Naive thymus-derived CD4-positive, alpha-beta T cell (primary cell): ENCODE measurements at regions of chr17 and their contacts with region 1.

Region 1: DNA sequence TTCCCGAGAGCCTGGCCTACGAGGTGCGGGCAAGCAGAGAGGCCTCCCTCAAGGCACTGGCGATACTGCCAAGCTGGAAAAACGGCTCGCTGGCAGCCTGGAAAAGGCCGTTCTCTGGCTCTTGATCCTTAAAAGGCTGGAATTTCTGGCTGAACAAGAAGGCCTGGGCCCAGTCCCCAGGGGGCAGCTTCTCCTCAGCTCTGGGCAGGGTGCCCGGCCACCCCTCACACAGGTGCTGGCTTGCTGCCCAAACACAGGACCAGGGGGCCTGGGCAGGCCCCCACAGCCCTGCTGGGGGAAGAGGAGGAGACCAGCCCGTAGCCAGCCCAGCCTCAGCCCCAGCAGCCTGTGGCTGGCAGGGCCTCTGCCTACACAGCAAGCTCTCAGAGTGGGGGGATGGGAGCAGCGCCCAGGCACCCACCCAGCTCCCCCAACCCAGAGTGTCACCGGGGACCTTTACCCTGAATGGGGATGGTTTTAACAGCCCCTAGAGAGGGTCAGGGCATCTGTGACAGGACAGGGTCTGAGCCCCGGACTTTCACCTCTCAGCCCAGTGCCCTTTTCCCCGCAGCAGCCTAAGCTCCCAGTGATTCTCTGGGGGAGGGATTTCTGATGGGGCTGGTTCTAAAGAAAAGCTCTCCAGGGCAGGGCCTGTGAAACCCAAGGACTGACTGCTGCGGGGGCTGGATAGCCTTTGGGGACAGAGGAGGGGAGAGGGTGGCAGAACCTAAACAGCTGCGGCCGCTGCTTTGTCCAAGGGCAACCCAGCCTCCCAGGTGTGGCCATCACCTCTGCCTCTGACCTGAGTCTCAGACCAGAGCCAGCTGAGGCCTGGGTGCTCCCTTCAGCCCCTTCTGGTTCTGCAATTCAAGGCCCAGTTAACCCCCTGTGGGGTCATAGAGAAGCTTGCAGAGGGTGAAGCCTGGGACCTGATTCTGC is 38.6 kb upstream of the TOB1 start:
- DNase-seq: no peak
- ATAC-seq: no peak
- H3K4me3 ChIP-seq: no peak overlapping the region
- H3K4me3 Mint-ChIP-seq: no peak overlapping the region
- H3K27ac ChIP-seq: no peak overlapping the region
- H3K27ac Mint-ChIP-seq: no peak overlapping the region
- H3K4me1 ChIP-seq: peaks cover 31 to 47% of the 10 kb centered on the region in 2 donors
- H3K4me1 Mint-ChIP-seq: peaks cover 40 to 68% (median 64%) of the 10 kb centered on the region in 7 donors
- H3K27me3 ChIP-seq: no peaks in the 10 kb centered on the region
- H3K27me3 Mint-ChIP-seq: peaks cover 0 to 2% (median 0%) of the 10 kb centered on the region in 5 donors

Region 2: GRCh38 chr17:50893183-50893993 is 11.4 kb before region 1 on chr17:
- CTCF ChIA-PET with region 1: interaction called, 5 read pairs
- POLR2A ChIA-PET with region 1: interaction called, 19 read pairs
- intact Hi-C with region 1: no loop called
- DNase-seq: no peak
- ATAC-seq: no peak
- H3K4me3 ChIP-seq: no peak overlapping the region
- H3K4me3 Mint-ChIP-seq: no peak overlapping the region
- H3K27ac ChIP-seq: no peak overlapping the region
- H3K27ac Mint-ChIP-seq: no peak overlapping the region
- H3K4me1 ChIP-seq: no peaks in the 10 kb centered on the region
- H3K4me1 Mint-ChIP-seq: peaks cover 4 to 17% (median 6%) of the 10 kb centered on the region in 7 donors
- H3K27me3 ChIP-seq: no peaks in the 10 kb centered on the region
- H3K27me3 Mint-ChIP-seq: peaks cover 0 to 30% (median 0%) of the 10 kb centered on the region in 5 donors

Region 3: GRCh38 chr17:50919321-50920085 is 14.7 kb after region 1 on chr17:
- CTCF ChIA-PET with region 1: interaction called, 4 read pairs
- POLR2A ChIA-PET with region 1: interaction called, 71 read pairs
- intact Hi-C with region 1: no loop called
- DNase-seq: peak; percentile 67 to 91 (median 83)
- ATAC-seq: peak; percentile 95
- H3K4me3 ChIP-seq: no peak overlapping the region
- H3K4me3 Mint-ChIP-seq: peak overlapping the region; percentile 36 to 86 (median 75)
- H3K27ac ChIP-seq: peak overlapping the region; percentile 76
- H3K27ac Mint-ChIP-seq: peak overlapping the region; percentile 89 to 98 (median 97)
- H3K4me1 ChIP-seq: peaks cover 22 to 44% of the 10 kb centered on the region in 2 donors
- H3K4me1 Mint-ChIP-seq: peaks cover 19 to 56% (median 43%) of the 10 kb centered on the region in 7 donors
- H3K27me3 ChIP-seq: no peaks in the 10 kb centered on the region
- H3K27me3 Mint-ChIP-seq: peaks cover 0 to 9% (median 0%) of the 10 kb centered on the region in 5 donors

Region 4: GRCh38 chr17:50931144-50931908 is 26.5 kb after region 1 on chr17:
- CTCF ChIA-PET with region 1: interaction called, 6 read pairs
- POLR2A ChIA-PET with region 1: interaction called, 11 read pairs
- intact Hi-C with region 1: no loop called
- DNase-seq: peak in 8 of 9 donors; percentile 47 to 73 (median 60)
- ATAC-seq: peak; percentile 69
- H3K4me3 ChIP-seq: peak overlapping the region; percentile 69
- H3K4me3 Mint-ChIP-seq: peak overlapping the region; percentile 84 to 97 (median 92)
- H3K27ac ChIP-seq: peak overlapping the region; percentile 63
- H3K27ac Mint-ChIP-seq: peak overlapping the region; percentile 77 to 100 (median 96)
- H3K4me1 ChIP-seq: peaks cover 20 to 21% of the 10 kb centered on the region in 2 donors
- H3K4me1 Mint-ChIP-seq: peaks cover 17 to 53% (median 33%) of the 10 kb centered on the region in 7 donors
- H3K27me3 ChIP-seq: no peaks in the 10 kb centered on the region
- H3K27me3 Mint-ChIP-seq: peaks cover 0 to 25% (median 0%) of the 10 kb centered on the region in 5 donors

Region 5: DNA sequence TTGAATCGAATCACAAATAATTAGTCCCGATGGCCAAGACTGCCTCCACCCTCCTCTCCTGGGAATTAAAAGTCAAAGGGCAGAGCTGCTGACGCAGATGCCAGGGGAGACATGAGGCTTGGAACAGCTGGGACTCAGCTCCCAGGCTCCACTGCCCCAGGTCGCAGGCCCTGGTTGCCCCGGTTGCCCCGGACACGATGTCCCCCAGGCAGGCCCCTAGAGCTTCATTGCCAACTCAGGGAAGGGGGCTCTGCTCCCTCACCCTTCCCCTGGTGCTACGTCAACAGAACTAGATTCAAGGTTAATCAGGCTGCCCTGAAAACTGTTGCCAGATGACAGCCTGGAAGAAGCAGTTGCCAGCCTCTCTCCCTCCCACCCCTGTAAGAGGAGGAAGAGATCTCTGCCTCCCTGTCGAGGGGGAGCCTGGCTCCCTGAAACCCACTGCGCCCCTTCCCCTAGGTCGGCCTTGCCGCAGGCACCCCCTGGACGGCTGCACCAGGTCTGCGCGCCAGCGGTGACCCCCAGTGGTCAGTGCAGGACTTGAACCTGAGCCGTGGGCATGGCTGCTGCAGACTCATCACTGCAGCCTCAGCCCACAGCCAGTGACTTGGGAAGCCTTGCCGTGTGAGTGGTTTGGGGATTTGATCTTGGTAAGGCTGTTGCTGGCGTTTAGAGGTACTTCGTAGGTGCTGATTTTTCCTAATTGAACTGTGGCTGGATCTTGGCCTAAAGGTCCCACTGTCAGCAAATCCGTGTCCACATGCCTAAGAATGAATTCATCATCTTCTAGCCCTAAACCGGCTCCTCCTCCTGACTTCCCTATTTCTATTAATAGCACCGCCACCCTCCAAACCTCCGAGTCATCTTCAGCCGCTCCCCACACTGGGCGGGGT is 45.4 kb after region 1 on chr17:
- CTCF ChIA-PET with region 1: interaction called, 5 read pairs
- POLR2A ChIA-PET with region 1: interaction called, 94 read pairs
- intact Hi-C with region 1: loop called in 1 of 2 experiments (anchors 2 kb)
- DNase-seq: peak; percentile 34 to 71 (median 51)
- ATAC-seq: peak; percentile 88
- H3K4me3 ChIP-seq: no peak overlapping the region
- H3K4me3 Mint-ChIP-seq: peak overlapping the region in 2 of 10 donors; percentile 5 to 62
- H3K27ac ChIP-seq: no peak overlapping the region
- H3K27ac Mint-ChIP-seq: peak overlapping the region in 5 of 9 donors; percentile 31 to 90 (median 69)
- H3K4me1 ChIP-seq: peaks cover 0 to 6% of the 10 kb centered on the region in 2 donors
- H3K4me1 Mint-ChIP-seq: peaks cover 14 to 39% (median 24%) of the 10 kb centered on the region in 7 donors
- H3K27me3 ChIP-seq: no peaks in the 10 kb centered on the region
- H3K27me3 Mint-ChIP-seq: no peaks in the 10 kb centered on the region